Activated CD4-positive, alpha-beta T cell treated with anti-CD3 and anti-CD28 coated beads, Interleukin-2, amount 10 ng/mL, durations not matched to agents 24 days and 14 days (primary cell): ENCODE measurements at regions of chr3 and their contacts with region 1.

Region 1: DNA sequence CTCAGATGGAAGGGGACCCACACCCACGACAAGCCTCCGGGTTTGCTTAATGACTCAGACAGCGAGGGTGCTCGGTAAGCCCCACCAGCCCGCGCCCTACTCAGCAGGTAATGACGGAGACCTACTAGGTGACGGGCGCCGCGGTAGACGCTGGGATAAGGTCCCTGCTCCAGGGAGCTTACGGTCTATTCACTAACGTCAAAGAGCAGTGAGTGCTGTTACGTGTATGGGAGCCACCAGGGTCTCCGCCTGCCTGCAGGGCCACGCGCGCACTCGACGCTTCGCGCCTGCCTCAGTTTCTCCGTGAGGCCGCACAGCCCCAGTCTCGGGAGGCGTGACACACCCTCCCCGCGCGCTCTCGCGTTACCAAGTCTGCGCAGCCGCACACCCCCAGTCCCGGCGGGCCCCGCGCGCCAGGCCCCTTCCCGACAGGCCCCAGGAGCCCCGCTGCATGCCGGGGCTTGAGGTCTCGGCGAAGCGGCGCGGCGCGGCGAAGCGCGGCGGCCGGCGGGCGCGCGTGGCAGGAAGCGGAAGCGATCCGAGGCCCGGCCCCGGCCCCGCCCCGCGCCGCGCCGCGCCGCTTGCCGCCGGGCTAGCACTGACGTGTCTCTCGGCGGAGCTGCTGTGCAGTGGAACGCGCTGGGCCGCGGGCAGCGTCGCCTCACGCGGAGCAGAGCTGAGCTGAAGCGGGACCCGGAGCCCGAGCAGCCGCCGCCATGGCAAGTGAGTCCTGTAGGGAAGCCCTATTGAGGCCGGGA is at the start of gene SEC61A1:
- DNase-seq: peak; percentile 99
- H3K4me3 Mint-ChIP-seq: peak within 1 kb of the TSS; percentile 95
- H3K27ac Mint-ChIP-seq: peak within 1 kb of the TSS; percentile 96
- H3K4me1 Mint-ChIP-seq: peaks cover 33% of the 10 kb centered on the region
- H3K27me3 Mint-ChIP-seq: peaks cover 9% of the 10 kb centered on the region
- total RNA-seq, gene SEC61A1: 194 TPM in 2 replicates

Region 2: DNA sequence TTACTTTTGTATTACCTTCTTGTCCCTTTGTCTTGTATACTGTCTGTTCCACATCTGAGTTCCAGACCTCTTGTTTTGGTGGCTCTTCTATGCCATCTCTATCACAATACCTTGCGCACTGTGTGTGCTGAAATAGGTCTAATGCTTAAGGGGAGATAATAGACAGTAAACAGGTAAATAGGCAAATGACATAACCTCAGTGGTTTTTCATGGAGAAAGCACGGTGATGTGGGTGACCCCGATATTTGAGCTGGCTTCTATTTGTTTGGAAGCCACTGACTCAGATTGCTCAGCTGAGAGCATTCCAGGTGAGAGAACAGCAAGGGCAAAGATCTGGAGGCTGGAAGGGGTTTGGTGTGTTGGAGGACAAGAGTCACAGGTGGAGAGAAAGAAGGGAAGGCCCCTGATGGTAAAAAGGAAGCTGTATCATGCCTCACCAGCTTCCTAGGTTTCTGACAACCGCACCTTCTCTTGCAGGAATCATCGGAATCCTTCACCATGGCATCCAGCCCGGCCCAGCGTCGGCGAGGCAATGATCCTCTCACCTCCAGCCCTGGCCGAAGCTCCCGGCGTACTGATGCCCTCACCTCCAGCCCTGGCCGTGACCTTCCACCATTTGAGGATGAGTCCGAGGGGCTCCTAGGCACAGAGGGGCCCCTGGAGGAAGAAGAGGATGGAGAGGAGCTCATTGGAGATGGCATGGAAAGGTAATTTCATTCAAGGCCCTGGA is 453.0 kb before region 1 on chr3:
- intact Hi-C with region 1: loop called (anchors 2 kb)
- DNase-seq: no peak
- H3K4me3 Mint-ChIP-seq: peak overlapping the region; percentile 90
- H3K27ac Mint-ChIP-seq: peak overlapping the region; percentile 95
- H3K4me1 Mint-ChIP-seq: peaks cover 41% of the 10 kb centered on the region
- H3K27me3 Mint-ChIP-seq: no peaks in the 10 kb centered on the region

Region 3: GRCh38 chr3:128075516-128076482 is 23.8 kb after region 1 on chr3:
- intact Hi-C with region 1: loop called (anchors 1 kb)
- DNase-seq: peak; percentile 96
- H3K4me3 Mint-ChIP-seq: peak overlapping the region; percentile 66
- H3K27ac Mint-ChIP-seq: no peak overlapping the region
- H3K4me1 Mint-ChIP-seq: peaks cover 8% of the 10 kb centered on the region
- H3K27me3 Mint-ChIP-seq: no peaks in the 10 kb centered on the region

Region 4: DNA sequence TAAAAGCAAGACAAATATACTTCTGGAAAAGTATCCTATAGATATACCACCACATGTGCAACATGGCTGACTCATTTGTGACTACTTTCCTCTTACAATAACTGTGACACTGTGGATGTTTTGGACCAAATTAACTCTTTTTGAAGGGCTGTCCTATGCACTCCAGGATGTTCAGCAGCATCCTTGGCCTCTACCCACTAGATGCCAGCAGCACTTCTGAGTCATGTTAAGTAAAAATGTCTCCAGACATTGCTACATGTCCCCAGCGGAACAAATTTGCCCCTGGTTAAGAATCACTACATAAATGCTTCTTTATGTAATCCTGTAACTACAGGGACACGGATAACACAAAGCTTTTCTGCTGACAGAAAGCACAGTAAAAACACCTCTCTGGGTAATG is 39.6 kb after region 1 on chr3:
- intact Hi-C with region 1: no loop called
- DNase-seq: no peak
- H3K4me3 Mint-ChIP-seq: no peak overlapping the region
- H3K27ac Mint-ChIP-seq: no peak overlapping the region
- H3K4me1 Mint-ChIP-seq: peaks cover 12% of the 10 kb centered on the region
- H3K27me3 Mint-ChIP-seq: no peaks in the 10 kb centered on the region

Region 5: DNA sequence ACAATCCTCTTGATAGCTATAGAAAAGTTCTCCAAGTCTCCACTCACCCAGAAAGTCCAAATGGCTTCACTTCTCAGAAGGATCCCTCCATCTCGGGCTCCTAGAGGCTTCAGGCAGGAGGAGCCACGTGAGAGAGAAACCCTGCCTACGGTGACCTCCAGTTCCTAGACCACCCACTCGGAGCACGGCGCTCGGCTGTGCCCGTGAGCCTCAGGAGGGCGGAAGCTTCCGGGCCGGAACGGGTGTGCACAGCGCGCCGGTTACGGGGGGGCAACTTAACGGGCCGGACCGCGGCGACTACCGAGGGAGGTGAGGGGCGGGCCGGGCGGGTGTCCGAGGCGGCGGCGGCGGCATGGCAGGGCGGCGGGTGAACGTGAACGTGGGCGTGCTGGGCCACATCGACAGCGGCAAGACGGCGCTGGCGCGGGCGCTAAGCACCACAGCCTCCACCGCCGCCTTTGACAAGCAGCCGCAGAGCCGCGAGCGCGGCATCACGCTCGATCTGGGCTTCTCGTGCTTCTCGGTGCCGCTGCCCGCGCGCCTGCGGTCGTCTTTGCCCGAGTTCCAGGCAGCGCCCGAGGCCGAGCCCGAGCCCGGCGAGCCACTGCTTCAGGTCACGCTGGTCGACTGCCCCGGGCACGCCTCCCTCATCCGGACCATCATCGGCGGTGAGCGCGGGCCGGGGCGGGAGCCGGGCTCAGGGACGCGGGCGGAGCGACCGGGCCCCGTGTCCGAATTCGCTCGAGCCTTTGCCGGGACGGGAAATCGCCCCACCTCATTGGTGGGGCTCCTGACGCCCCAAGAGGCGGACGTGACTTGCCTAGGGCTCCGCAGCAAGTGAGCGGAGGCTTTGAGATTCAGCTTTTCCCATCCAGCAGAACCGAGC is 101.4 kb after region 1 on chr3 and contains the start of gene EEFSEC:
- intact Hi-C with region 1: loop called (anchors 1 kb)
- DNase-seq: peak; percentile 96
- H3K4me3 Mint-ChIP-seq: peak within 1 kb of the TSS; percentile 89
- H3K27ac Mint-ChIP-seq: peak within 1 kb of the TSS; percentile 95
- H3K4me1 Mint-ChIP-seq: peaks cover 17% of the 10 kb centered on the region
- H3K27me3 Mint-ChIP-seq: no peaks in the 10 kb centered on the region
- total RNA-seq, gene EEFSEC: 19.2 and 21.3 TPM in 2 replicates